HepG2 (cell line): ENCODE measurements at regions of chr12 and their contacts with region 1.

Region 1: GRCh38 chr12:66409195-66409871 is 107.0 kb downstream of the HELB start:
- DNase-seq: peak; percentile 34
- ATAC-seq: peak; percentile 74
- H3K4me3 ChIP-seq: no peak overlapping the region
- H3K27ac ChIP-seq: no peak overlapping the region
- H3K4me1 ChIP-seq: no peaks in the 10 kb centered on the region
- H3K27me3 ChIP-seq: no peaks in the 10 kb centered on the region
- CTCF ChIP-seq: peak; percentile 81
- EP300 ChIP-seq: no peak
- POLR2A ChIP-seq: no peak
- RAD21 ChIP-seq: peak; percentile 42; the same call in 1 of the 2 replicates

Region 2: GRCh38 chr12:66144791-66145754 is 264.3 kb before region 1 on chr12:
- CTCF ChIA-PET with region 1: interaction called, 3 read pairs
- POLR2A ChIA-PET with region 1: no interaction called
- in situ Hi-C with region 1: loop called (anchors 10 kb)
- intact Hi-C with region 1: no loop called
- DNase-seq: peak; percentile 69
- ATAC-seq: peak; percentile 84
- H3K4me3 ChIP-seq: no peak overlapping the region
- H3K27ac ChIP-seq: no peak overlapping the region
- H3K4me1 ChIP-seq: peaks cover 7% of the 10 kb centered on the region; the same call in 1 of the 2 replicates
- H3K27me3 ChIP-seq: no peaks in the 10 kb centered on the region
- CTCF ChIP-seq: peak; percentile 66
- EP300 ChIP-seq: no peak
- POLR2A ChIP-seq: no peak
- RAD21 ChIP-seq: no peak

Region 3: GRCh38 chr12:66269757-66270383 is 139.5 kb before region 1 on chr12:
- CTCF ChIA-PET with region 1: interaction called, 6 read pairs
- POLR2A ChIA-PET with region 1: no interaction called
- in situ Hi-C with region 1: loop called (anchors 5 kb)
- intact Hi-C with region 1: loop called (anchors 2 kb)
- DNase-seq: peak; percentile 40
- ATAC-seq: peak; percentile 75
- H3K4me3 ChIP-seq: no peak overlapping the region
- H3K27ac ChIP-seq: no peak overlapping the region
- H3K4me1 ChIP-seq: no peaks in the 10 kb centered on the region
- H3K27me3 ChIP-seq: peaks cover 0 to 3% of the 10 kb centered on the region in 2 experiments; a peak in 2 of 5 replicates
- CTCF ChIP-seq: peak; percentile 59
- EP300 ChIP-seq: no peak
- POLR2A ChIP-seq: no peak
- RAD21 ChIP-seq: no peak

Region 4: GRCh38 chr12:66279123-66279712 is 130.1 kb before region 1 on chr12:
- CTCF ChIA-PET with region 1: interaction called, 6 read pairs
- POLR2A ChIA-PET with region 1: no interaction called
- in situ Hi-C with region 1: no loop called
- intact Hi-C with region 1: loop called (anchors 1 kb)
- DNase-seq: peak; percentile 27
- ATAC-seq: peak; percentile 85
- H3K4me3 ChIP-seq: no peak overlapping the region
- H3K27ac ChIP-seq: no peak overlapping the region
- H3K4me1 ChIP-seq: no peaks in the 10 kb centered on the region
- H3K27me3 ChIP-seq: peaks cover 0 to 3% of the 10 kb centered on the region in 2 experiments; a peak in 1 of 5 replicates
- CTCF ChIP-seq: peak; percentile 63
- EP300 ChIP-seq: no peak
- POLR2A ChIP-seq: no peak
- RAD21 ChIP-seq: no peak

Region 5: DNA sequence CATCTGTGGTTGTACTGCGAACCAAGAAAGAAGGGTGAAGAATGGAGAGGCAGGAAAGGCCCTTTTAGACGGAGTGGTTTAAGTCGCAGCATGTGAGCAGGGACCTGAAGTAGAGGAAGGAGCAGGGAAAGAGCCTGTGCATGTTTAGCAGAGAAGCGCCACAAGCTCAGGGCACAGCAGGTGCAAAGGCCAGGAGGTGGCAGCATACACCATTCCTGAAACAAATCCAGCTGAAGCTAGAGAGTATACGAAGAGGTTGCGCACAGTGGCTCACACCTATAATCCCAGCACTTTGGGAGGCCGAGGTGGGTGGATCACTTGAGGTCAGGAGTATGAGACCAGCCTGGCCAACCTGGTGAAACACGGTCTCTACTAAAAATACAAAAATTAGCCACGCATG is 57.1 kb before region 1 on chr12:
- CTCF ChIA-PET with region 1: interaction called, 6 read pairs
- POLR2A ChIA-PET with region 1: no interaction called
- in situ Hi-C with region 1: no loop called
- intact Hi-C with region 1: loop called (anchors 1 kb)
- DNase-seq: peak; percentile 18
- ATAC-seq: peak; percentile 93
- H3K4me3 ChIP-seq: no peak overlapping the region
- H3K27ac ChIP-seq: no peak overlapping the region
- H3K4me1 ChIP-seq: no peaks in the 10 kb centered on the region
- H3K27me3 ChIP-seq: peaks cover 0 to 4% of the 10 kb centered on the region in 2 experiments; a peak in 1 of 5 replicates
- CTCF ChIP-seq: peak; percentile 73
- EP300 ChIP-seq: no peak
- POLR2A ChIP-seq: no peak
- RAD21 ChIP-seq: no peak

Region 6: DNA sequence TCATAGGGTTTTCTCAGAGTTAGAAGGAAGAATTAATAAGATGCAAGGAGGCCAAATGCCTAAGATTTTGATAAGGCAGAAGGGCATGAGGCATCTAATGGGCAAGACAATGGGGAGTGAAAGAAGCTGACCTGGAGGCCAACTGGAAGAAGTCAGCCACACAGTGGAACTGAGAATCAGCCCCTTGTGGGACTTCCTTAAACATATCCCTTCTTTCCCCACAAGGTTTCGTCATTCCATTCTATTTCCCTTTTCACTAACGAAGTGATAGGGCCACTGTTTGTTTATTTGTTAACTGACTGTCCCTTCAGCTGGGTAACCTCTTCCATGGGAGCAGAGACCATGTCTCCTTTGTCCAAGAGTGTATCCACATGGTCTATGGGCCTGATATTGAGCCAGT is 20.8 kb before region 1 on chr12:
- CTCF ChIA-PET with region 1: no interaction called
- POLR2A ChIA-PET with region 1: no interaction called
- in situ Hi-C with region 1: no loop called
- intact Hi-C with region 1: no loop called
- DNase-seq: no peak
- ATAC-seq: no peak
- H3K4me3 ChIP-seq: no peak overlapping the region
- H3K27ac ChIP-seq: no peak overlapping the region
- H3K4me1 ChIP-seq: no peaks in the 10 kb centered on the region
- H3K27me3 ChIP-seq: no peaks in the 10 kb centered on the region; a peak in 2 of 5 replicates
- CTCF ChIP-seq: no peak
- EP300 ChIP-seq: no peak
- POLR2A ChIP-seq: no peak
- RAD21 ChIP-seq: no peak

Region 7: DNA sequence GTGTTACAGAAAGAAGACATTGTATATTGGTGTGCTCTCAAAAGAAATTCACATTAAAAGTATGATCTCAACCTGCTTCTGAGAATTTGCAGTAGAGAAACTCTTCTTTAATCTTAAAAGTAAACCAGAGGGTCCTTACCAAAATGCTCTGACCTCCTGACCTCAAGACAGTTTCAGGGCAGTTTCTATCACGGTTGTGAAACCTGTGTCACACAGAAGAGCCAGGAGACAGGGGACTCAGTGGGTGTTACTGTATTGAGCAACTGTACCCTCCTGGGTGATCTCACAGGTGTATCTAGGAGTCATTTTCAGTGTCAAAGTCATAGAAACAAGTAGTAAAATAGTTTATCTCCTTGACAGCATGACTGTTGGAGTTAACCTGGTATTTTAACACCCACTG is 91.5 kb after region 1 on chr12:
- CTCF ChIA-PET with region 1: no interaction called
- POLR2A ChIA-PET with region 1: no interaction called
- in situ Hi-C with region 1: no loop called
- intact Hi-C with region 1: no loop called
- DNase-seq: no peak
- ATAC-seq: no peak
- H3K4me3 ChIP-seq: no peak overlapping the region
- H3K27ac ChIP-seq: no peak overlapping the region
- H3K4me1 ChIP-seq: no peaks in the 10 kb centered on the region
- H3K27me3 ChIP-seq: no peaks in the 10 kb centered on the region
- CTCF ChIP-seq: no peak
- EP300 ChIP-seq: no peak
- POLR2A ChIP-seq: no peak
- RAD21 ChIP-seq: no peak